ENCODE measurements at regions of chr12 and their contacts with region 1.

Region 1: GRCh38 chr12:121773011-121773777 is 20.3 kb downstream of the RHOF start:
- DNase-seq: peak; percentile 70 to 80
- H3K4me3 ChIP-seq: no peak overlapping the region
- H3K27ac ChIP-seq: no peak overlapping the region
- H3K4me1 ChIP-seq: peaks cover 20% of the 10 kb centered on the region
- H3K27me3 ChIP-seq: no peaks in the 10 kb centered on the region
- CTCF ChIP-seq: peak; percentile 86

Region 2: DNA sequence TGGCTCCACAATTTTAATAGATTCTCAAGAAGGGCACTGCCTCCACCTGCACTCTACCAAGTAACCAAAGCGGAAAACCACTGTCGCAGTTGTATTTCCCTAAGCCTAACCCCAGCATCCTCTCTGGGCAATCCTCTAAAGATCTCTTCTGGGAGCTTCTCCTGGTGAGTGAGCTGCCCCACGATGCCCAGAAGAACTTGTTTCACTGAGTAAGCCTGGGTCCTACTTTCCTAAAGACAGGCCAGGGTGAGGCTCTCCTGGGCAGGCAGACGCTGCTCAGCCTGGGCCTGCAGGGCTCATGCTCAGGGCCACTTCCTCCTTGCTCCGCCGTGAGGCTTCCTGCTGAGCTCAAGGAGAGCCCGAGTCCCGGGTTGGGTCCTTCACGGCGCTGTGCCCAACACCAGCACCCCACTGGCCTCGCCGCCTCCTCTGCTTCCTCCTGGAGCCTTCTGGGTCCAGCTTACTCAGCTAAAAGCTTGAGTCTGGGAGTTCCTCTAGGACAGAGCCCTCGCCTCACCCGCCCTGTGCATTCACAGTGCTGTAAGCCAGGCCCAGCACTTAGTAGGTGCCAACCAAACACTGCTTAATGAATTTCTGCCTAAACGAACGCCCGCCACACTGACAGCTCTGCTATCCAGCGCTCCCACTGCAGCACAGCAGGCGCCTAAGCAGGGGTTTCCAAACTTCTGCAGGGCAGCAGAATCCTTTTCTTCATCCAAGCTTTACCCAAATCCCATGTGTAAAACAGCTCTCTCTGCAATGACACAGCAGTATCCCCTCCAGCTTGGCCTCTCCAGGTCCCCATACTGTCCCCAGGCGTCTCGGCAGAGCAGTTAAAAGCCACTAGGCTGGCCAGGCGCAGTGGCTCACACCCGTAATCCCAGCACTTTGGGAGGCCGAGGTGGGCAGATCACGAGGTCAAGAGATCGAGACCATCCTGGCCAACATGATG is 1662.4 kb before region 1 on chr12:
- CTCF ChIA-PET with region 1: no interaction called
- POLR2A ChIA-PET with region 1: interaction called, 36 read pairs
- intact Hi-C with region 1: no loop called
- DNase-seq: no peak
- H3K4me3 ChIP-seq: no peak overlapping the region
- H3K27ac ChIP-seq: no peak overlapping the region
- H3K4me1 ChIP-seq: peaks cover 9% of the 10 kb centered on the region
- H3K27me3 ChIP-seq: no peaks in the 10 kb centered on the region
- CTCF ChIP-seq: no peak

Region 3: GRCh38 chr12:121678716-121679580 is 94.2 kb before region 1 on chr12:
- CTCF ChIA-PET with region 1: interaction called, 10 read pairs
- POLR2A ChIA-PET with region 1: no interaction called
- intact Hi-C with region 1: no loop called
- DNase-seq: no peak
- H3K4me3 ChIP-seq: no peak overlapping the region
- H3K27ac ChIP-seq: no peak overlapping the region
- H3K4me1 ChIP-seq: no peaks in the 10 kb centered on the region
- H3K27me3 ChIP-seq: no peaks in the 10 kb centered on the region
- CTCF ChIP-seq: no peak

Region 4: DNA sequence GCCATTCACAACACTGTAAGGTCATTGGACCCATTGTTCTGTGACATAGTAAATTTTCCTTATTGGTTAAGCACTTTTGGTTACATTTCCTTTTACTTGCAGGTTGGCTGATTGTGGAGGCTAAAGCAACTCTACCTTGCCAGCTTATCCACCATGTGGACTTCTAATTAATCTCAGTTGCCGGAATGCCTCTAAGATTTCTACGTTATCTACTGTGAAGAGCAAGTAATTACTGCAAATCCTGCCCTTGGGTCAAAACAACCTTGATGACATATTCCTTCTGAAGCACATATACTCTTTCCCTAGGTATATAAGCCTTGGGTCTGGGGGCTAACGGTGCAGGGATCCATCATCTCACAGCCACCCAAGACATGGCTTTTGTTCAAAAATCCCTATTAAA is 84.2 kb before region 1 on chr12:
- CTCF ChIA-PET with region 1: interaction called, 10 read pairs
- POLR2A ChIA-PET with region 1: interaction called, 22 read pairs
- intact Hi-C with region 1: no loop called
- DNase-seq: no peak
- H3K4me3 ChIP-seq: no peak overlapping the region
- H3K27ac ChIP-seq: no peak overlapping the region
- H3K4me1 ChIP-seq: peaks cover 4% of the 10 kb centered on the region; the same call in 1 of the 2 replicates
- H3K27me3 ChIP-seq: no peaks in the 10 kb centered on the region
- CTCF ChIP-seq: no peak

Region 5: GRCh38 chr12:121697098-121697698 is 76.0 kb before region 1 on chr12:
- CTCF ChIA-PET with region 1: interaction called, 3 read pairs
- POLR2A ChIA-PET with region 1: no interaction called
- intact Hi-C with region 1: loop called (anchors 1 kb)
- DNase-seq: peak in 1 of 2 experiments; percentile 13
- H3K4me3 ChIP-seq: no peak overlapping the region
- H3K27ac ChIP-seq: no peak overlapping the region
- H3K4me1 ChIP-seq: no peaks in the 10 kb centered on the region; the same call in 1 of the 2 replicates
- H3K27me3 ChIP-seq: no peaks in the 10 kb centered on the region
- CTCF ChIP-seq: peak; percentile 70

Region 6: DNA sequence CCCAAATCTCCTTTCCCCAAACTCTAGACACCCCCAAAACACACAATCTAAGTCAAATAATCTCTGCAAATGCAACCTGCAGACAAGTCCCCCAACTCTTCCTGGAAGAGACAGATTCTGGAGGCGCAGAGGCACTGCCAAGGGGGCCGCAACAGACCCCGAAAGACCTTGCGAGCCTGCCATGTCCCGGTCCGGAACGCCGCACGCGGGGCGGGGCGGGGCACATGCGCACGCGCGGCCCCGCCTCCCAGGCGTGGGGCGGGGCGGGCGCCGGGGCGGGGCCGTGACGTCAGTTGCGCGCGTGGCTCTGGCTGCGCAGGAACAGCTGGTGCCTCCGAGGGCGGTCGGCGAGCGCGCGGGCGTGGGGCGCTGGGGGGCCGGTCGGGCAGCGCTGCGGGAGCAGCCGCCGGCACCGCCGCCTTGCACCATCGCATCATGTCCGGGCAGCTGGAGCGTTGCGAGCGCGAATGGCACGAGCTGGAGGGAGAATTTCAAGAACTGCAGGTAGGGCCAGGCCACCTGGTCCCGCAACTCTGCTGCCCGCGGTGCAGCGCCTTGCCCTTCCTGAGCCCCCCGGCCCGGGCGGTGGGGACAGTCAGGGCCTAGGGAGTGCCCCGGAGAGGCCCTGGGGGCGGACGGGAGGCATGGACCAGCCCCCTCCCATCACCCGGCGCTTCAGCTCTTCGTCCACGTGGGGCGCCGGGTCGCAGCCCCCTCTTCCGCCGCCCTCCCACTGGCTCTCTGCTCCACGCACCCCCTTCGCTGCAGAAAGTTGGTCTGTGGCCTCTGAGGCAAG is 60.5 kb before region 1 on chr12 and contains the start of gene TMEM120B:
- CTCF ChIA-PET with region 1: interaction called, 11 read pairs
- POLR2A ChIA-PET with region 1: interaction called, 5 read pairs
- intact Hi-C with region 1: loop called (anchors 5 kb)
- DNase-seq: peak; percentile 41 to 84
- H3K4me3 ChIP-seq: peak within 1 kb of the TSS; percentile 77
- H3K27ac ChIP-seq: peak within 1 kb of the TSS; percentile 40; the same call in 1 of the 2 replicates
- H3K4me1 ChIP-seq: peaks cover 35% of the 10 kb centered on the region
- H3K27me3 ChIP-seq: no peaks in the 10 kb centered on the region
- CTCF ChIP-seq: no peak
- total RNA-seq, gene TMEM120B: 10.3 and 12.4 TPM in 2 replicates

Region 7: GRCh38 chr12:121786441-121786825 is 13.2 kb after region 1 on chr12:
- CTCF ChIA-PET with region 1: interaction called, 9 read pairs
- POLR2A ChIA-PET with region 1: interaction called, 37 read pairs
- intact Hi-C with region 1: loop called (anchors 1 kb)
- DNase-seq: peak; percentile 96 to 98
- H3K4me3 ChIP-seq: no peak overlapping the region
- H3K27ac ChIP-seq: peak overlapping the region; percentile 100
- H3K4me1 ChIP-seq: peaks cover 88% of the 10 kb centered on the region
- H3K27me3 ChIP-seq: no peaks in the 10 kb centered on the region
- CTCF ChIP-seq: no peak

Region 8: GRCh38 chr12:121992059-121992879 is 219.1 kb after region 1 on chr12:
- CTCF ChIA-PET with region 1: no interaction called
- POLR2A ChIA-PET with region 1: no interaction called
- intact Hi-C with region 1: no loop called
- DNase-seq: peak; percentile 46 to 86
- H3K4me3 ChIP-seq: no peak overlapping the region; the same call in 1 of the 2 replicates
- H3K27ac ChIP-seq: peak overlapping the region; percentile 53
- H3K4me1 ChIP-seq: no peaks in the 10 kb centered on the region; the same call in 1 of the 2 replicates
- H3K27me3 ChIP-seq: no peaks in the 10 kb centered on the region
- CTCF ChIP-seq: no peak

Measured in PC-9 (cell line).